ENCODE measurements at regions of chr5 and their contacts with region 1.

Region 1: DNA sequence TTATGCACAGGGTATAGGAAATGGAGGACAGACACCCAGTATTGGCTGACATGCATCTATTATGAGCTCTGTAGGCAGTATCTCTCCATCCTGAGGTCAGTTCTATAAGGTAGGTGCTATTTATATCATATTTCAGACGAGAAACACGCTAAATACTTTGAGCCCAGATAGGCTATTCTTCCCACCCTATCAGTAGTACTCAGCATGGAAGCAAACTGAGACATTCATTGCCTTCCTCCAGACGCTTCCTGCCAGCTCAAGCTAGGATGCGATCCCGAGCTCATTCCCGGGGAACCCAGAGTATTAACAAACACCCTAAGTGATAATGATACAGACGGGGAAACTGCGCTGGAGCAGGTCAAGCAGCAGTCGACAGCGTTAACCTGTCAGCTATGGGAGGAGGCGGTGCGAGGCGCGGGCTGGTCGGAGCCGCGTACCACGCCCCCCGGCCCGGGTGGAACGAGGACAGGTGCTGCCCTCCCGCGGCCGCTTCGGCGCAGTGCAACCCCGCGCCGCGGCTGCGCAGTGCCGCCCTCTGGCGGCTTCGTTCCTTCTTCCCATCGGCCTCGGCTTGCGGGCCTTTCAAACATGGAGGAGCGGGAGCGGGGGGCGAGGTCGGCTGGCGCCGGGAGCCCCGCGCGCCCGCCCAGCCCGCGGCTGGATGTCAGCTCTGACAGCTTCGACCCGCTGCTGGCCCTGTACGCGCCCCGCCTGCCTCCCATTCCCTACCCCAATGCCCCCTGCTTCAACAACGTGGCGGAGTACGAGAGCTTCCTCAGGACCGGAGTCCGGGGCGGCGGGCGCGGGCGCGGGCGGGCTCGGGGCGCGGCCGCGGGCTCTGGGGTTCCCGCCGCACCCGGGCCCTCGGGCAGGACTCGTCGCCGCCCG is at the start of gene LSM11:
- DNase-seq: peak; percentile 90
- H3K4me3 Mint-ChIP-seq: peak within 1 kb of the TSS; percentile 98
- H3K27ac Mint-ChIP-seq: peak within 1 kb of the TSS; percentile 93
- H3K4me1 Mint-ChIP-seq: peaks cover 46% of the 10 kb centered on the region
- H3K27me3 Mint-ChIP-seq: peaks cover 3% of the 10 kb centered on the region
- total RNA-seq, gene LSM11: 8.8 and 9.0 TPM in 2 replicates

Region 2: GRCh38 chr5:157219491-157220271 is 523.7 kb before region 1 on chr5:
- intact Hi-C with region 1: no loop called
- DNase-seq: peak; percentile 43
- H3K4me3 Mint-ChIP-seq: peak overlapping the region; percentile 41
- H3K27ac Mint-ChIP-seq: peak overlapping the region; percentile 93
- H3K4me1 Mint-ChIP-seq: peaks cover 81% of the 10 kb centered on the region
- H3K27me3 Mint-ChIP-seq: no peaks in the 10 kb centered on the region

Region 3: DNA sequence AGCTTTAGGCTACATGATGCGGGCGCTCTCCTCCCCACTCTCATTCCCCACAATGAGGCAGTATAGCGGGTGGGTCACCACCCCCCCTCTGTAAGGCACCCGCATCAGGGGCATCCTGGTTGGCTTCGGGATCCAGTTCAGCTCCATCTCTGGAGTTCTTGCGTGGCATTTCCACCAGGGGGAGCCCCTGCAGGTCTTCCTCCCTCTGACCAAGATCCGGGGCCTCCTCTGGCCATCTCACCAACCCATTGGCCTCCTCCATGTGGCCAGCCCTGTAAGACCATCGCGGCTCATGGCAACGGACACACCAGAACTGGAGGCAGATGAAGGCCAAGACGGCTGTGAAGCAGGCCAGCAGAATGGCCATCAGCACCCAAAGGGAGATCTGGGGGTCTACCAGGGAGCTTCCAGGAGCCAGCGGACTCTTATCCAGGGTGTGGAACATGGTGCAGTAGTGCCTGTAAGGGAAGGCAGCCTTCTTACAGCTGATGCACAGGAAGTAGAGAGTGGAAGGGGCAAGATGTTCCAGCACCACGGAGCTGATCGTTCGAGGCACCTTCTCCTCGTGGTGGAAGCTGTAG is 400.5 kb before region 1 on chr5:
- intact Hi-C with region 1: loop called (anchors 1 kb)
- DNase-seq: no peak
- H3K4me3 Mint-ChIP-seq: no peak overlapping the region
- H3K27ac Mint-ChIP-seq: no peak overlapping the region
- H3K4me1 Mint-ChIP-seq: peaks cover 29% of the 10 kb centered on the region
- H3K27me3 Mint-ChIP-seq: no peaks in the 10 kb centered on the region

Region 4: DNA sequence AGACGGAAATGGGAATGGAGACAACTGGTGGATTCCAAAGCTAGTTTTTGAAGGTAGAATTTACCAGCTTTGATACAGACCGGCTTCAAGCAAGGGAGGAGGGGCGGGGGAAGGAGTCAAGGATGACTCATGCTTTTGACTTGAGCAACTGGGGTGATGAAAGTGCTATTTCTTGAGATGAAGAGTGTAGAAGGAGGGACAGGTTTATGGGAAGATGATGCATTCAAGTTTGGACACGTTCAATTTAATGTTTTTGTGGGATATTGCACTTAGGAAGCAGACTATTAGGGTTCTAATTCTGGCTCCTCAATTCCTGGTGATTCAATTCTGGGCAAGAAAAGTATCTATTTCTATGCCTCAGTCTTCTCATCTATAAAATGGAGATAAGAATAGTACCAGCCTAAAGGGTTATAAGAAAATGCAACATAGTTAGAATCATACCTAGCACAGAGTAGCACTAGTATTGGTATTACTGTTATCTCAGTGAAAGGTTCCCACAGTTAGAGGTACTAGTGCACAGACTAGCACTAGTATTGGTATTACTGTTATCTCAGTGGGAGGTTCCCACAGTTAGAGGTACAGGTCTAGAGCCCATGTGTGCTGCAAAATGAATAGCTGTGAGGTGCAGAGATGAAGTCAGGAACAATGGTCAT is 278.8 kb before region 1 on chr5:
- intact Hi-C with region 1: loop called (anchors 1 kb)
- DNase-seq: peak; percentile 42
- H3K4me3 Mint-ChIP-seq: peak overlapping the region; percentile 36
- H3K27ac Mint-ChIP-seq: peak overlapping the region; percentile 83
- H3K4me1 Mint-ChIP-seq: peaks cover 48% of the 10 kb centered on the region
- H3K27me3 Mint-ChIP-seq: peaks cover 17% of the 10 kb centered on the region

Region 5: GRCh38 chr5:157651623-157652549 is 91.5 kb before region 1 on chr5 and contains the start of gene SOX30:
- intact Hi-C with region 1: loop called (anchors 1 kb)
- DNase-seq: peak; percentile 75
- H3K4me3 Mint-ChIP-seq: peak within 1 kb of the TSS; percentile 80
- H3K27ac Mint-ChIP-seq: peak within 1 kb of the TSS; percentile 86
- H3K4me1 Mint-ChIP-seq: peaks cover 10% of the 10 kb centered on the region
- H3K27me3 Mint-ChIP-seq: no peaks in the 10 kb centered on the region
- total RNA-seq, gene SOX30: 0.12 and 0.29 TPM in 2 replicates

Measured in activated T-helper 1 cell treated with anti-CD3 and anti-CD28 coated beads, Interleukin-12 subunit alpha, Interleukin-12 subunit beta, Interleukin-2, Interleukin-4 antibody, amounts not matched to agents 30 ng/mL and 10 ng/mL and 1 ng/mL, durations not matched to agents 14 hours and 24 hours and 36 hours (primary cell).